CD4-positive, alpha-beta memory T cell (primary cell): ENCODE measurements at regions of chr2 and their contacts with region 1.

Region 1: DNA sequence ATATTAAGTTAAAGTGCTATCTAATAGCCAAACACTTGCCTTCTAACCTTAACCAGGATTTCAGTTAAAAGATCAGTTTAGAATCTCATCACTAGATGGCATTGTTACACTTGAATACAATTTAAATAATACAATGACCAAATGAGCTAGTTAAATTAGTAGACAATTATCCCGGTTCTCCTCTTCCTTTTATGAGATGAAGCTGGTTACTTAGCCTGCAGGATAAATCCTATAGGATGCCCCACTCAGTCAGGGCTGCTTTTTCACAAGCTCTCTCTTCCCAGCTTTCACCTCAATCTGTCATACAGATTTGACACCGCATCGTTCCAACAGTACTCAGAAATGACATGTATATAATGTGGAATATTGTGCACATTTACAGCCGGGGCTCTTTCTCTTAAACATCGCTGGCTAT is 678.8 kb downstream of the KCNJ3 start:
- DNase-seq: peak in 1 of 5 donors; percentile 3
- H3K4me3 ChIP-seq: no peak overlapping the region
- H3K4me3 Mint-ChIP-seq: no peak overlapping the region
- H3K27ac ChIP-seq: no peak overlapping the region
- H3K27ac Mint-ChIP-seq: no peak overlapping the region
- H3K4me1 ChIP-seq: no peaks in the 10 kb centered on the region
- H3K4me1 Mint-ChIP-seq: peaks cover 0 to 2% (median 1%) of the 10 kb centered on the region in 4 donors
- H3K27me3 ChIP-seq: no peaks in the 10 kb centered on the region
- H3K27me3 Mint-ChIP-seq: no peaks in the 10 kb centered on the region

Region 2: DNA sequence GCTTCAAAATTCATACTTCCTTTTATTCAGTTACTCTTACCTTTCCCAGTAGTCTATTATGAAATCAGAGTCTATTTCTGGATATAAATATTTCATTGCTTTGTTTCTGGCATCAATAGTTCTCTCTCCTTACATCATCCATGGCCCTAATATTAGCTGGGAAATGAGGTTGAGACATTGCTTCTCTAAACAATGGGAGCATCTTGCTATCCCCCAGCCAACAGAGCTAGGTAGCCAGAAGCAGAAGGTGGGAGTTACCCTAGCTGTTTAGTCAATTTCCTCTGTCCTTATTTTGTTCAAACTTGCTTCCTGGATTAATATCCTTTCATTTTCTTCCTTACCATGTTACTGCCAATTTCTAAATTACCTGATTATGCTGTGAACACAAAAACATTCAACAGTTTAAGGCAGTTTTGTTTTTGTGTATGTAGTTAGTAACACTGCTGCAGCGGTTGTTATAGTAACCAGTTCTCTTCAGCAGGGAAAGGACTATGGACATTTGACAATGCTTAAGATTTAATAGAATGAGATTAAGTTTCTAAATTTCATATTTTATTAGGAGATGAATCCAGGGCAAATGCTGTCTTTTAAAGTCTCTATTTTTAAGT is 839.3 kb before region 1 on chr2:
- CTCF ChIA-PET with region 1: no interaction called
- POLR2A ChIA-PET with region 1: no interaction called
- intact Hi-C with region 1: no loop called
- DNase-seq: no peak
- H3K4me3 ChIP-seq: no peak overlapping the region
- H3K4me3 Mint-ChIP-seq: no peak overlapping the region
- H3K27ac ChIP-seq: no peak overlapping the region
- H3K27ac Mint-ChIP-seq: no peak overlapping the region
- H3K4me1 ChIP-seq: no peaks in the 10 kb centered on the region
- H3K4me1 Mint-ChIP-seq: no peaks in the 10 kb centered on the region
- H3K27me3 ChIP-seq: no peaks in the 10 kb centered on the region
- H3K27me3 Mint-ChIP-seq: no peaks in the 10 kb centered on the region

Region 3: DNA sequence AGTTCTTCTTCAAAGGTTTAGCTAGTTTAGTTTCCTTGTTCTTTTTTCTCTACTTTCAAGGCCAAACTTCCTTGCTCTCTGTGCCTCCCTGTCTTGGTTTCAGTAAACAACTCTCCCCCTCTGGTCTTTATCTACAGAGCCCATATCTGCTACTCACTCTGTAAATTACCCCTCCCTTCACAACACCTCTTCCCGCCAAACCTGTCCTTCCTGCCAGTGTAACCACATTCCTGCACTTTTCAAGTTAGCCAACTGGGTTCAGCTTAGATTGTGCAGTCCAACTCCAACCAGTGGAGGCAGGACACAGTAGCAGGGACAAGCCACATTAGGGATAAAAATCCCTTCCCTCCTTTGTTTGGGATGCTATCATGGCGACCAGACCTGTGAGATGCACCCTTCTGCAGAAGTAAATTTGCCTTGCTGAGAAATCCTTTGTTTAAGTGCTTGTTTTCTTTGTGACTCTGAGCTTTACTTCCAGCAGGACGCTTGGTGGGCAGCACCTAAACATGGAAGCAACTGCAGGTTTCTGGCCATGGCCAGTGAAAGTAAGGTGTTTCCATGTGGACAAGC is 27.2 kb after region 1 on chr2:
- CTCF ChIA-PET with region 1: no interaction called
- POLR2A ChIA-PET with region 1: no interaction called
- intact Hi-C with region 1: no loop called
- DNase-seq: no peak
- H3K4me3 ChIP-seq: no peak overlapping the region
- H3K4me3 Mint-ChIP-seq: no peak overlapping the region
- H3K27ac ChIP-seq: no peak overlapping the region
- H3K27ac Mint-ChIP-seq: no peak overlapping the region
- H3K4me1 ChIP-seq: no peaks in the 10 kb centered on the region
- H3K4me1 Mint-ChIP-seq: no peaks in the 10 kb centered on the region
- H3K27me3 ChIP-seq: no peaks in the 10 kb centered on the region
- H3K27me3 Mint-ChIP-seq: peaks cover 0 to 2% of the 10 kb centered on the region in 2 donors

Region 4: GRCh38 chr2:156892467-156893281 is 1515.4 kb after region 1 on chr2:
- CTCF ChIA-PET with region 1: no interaction called
- POLR2A ChIA-PET with region 1: no interaction called
- intact Hi-C with region 1: loop called (anchors 2 kb)
- DNase-seq: peak in 3 of 5 donors; percentile 7 to 11 (median 11)
- H3K4me3 ChIP-seq: no peak overlapping the region
- H3K4me3 Mint-ChIP-seq: peak overlapping the region in 2 of 8 donors; percentile 27 to 61
- H3K27ac ChIP-seq: no peak overlapping the region
- H3K27ac Mint-ChIP-seq: no peak overlapping the region
- H3K4me1 ChIP-seq: peaks cover 5% of the 10 kb centered on the region
- H3K4me1 Mint-ChIP-seq: peaks cover 0 to 11% (median 9%) of the 10 kb centered on the region in 4 donors
- H3K27me3 ChIP-seq: no peaks in the 10 kb centered on the region
- H3K27me3 Mint-ChIP-seq: peaks cover 8 to 12% of the 10 kb centered on the region in 2 donors

Region 5: DNA sequence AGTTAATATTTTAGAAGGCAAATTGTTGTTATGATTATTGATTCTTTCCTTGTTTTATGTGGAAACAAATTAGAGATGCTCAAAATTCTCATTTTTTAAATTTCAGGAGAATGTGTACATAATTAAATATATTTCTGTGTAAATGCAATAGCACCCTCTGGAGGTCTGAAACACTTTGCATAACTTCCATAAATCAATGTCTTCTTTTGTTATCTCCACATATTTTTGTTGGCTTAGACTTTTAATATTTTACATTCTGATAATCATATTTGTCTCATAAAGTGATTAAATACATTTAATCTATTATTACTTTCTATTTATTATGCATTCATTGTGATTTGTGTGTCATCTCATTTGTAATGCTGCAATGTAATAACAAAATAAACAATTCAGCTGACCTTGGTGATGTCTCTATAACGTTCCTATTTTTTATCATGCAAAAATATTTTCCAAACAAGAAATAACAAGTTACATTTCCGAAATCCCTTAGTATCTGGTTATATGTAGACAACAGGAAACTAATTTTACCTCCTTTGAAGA is 1678.5 kb after region 1 on chr2:
- CTCF ChIA-PET with region 1: no interaction called
- POLR2A ChIA-PET with region 1: no interaction called
- intact Hi-C with region 1: loop called (anchors 5 kb)
- DNase-seq: no peak
- H3K4me3 ChIP-seq: no peak overlapping the region
- H3K4me3 Mint-ChIP-seq: no peak overlapping the region
- H3K27ac ChIP-seq: no peak overlapping the region
- H3K27ac Mint-ChIP-seq: no peak overlapping the region
- H3K4me1 ChIP-seq: no peaks in the 10 kb centered on the region
- H3K4me1 Mint-ChIP-seq: no peaks in the 10 kb centered on the region
- H3K27me3 ChIP-seq: no peaks in the 10 kb centered on the region
- H3K27me3 Mint-ChIP-seq: peaks cover 3% of the 10 kb centered on the region in 2 donors